Activated CD4-positive, alpha-beta T cell treated with anti-CD3 and anti-CD28 coated beads, Interleukin-2, amount 10 ng/mL, durations not matched to agents 24 days and 14 days (primary cell): ENCODE measurements at regions of chr1 and their contacts with region 1.

Region 1: GRCh38 chr1:89454845-89455521 is 69.6 kb upstream of the LRRC8B start:
- DNase-seq: peak; percentile 91
- H3K4me3 Mint-ChIP-seq: no peak overlapping the region
- H3K27ac Mint-ChIP-seq: no peak overlapping the region
- H3K4me1 Mint-ChIP-seq: peaks cover 23% of the 10 kb centered on the region
- H3K27me3 Mint-ChIP-seq: peaks cover 38% of the 10 kb centered on the region

Region 2: GRCh38 chr1:88983791-88984559 is 471.0 kb before region 1 on chr1:
- intact Hi-C with region 1: loop called (anchors 2 kb)
- DNase-seq: peak; percentile 79
- H3K4me3 Mint-ChIP-seq: peak overlapping the region; percentile 54
- H3K27ac Mint-ChIP-seq: peak overlapping the region; percentile 90
- H3K4me1 Mint-ChIP-seq: peaks cover 77% of the 10 kb centered on the region
- H3K27me3 Mint-ChIP-seq: no peaks in the 10 kb centered on the region

Region 3: GRCh38 chr1:89041119-89041641 is 413.8 kb before region 1 on chr1:
- intact Hi-C with region 1: loop called (anchors 1 kb)
- DNase-seq: peak; percentile 66
- H3K4me3 Mint-ChIP-seq: peak overlapping the region; percentile 59
- H3K27ac Mint-ChIP-seq: peak overlapping the region; percentile 82
- H3K4me1 Mint-ChIP-seq: peaks cover 32% of the 10 kb centered on the region
- H3K27me3 Mint-ChIP-seq: peaks cover 10% of the 10 kb centered on the region

Region 4: DNA sequence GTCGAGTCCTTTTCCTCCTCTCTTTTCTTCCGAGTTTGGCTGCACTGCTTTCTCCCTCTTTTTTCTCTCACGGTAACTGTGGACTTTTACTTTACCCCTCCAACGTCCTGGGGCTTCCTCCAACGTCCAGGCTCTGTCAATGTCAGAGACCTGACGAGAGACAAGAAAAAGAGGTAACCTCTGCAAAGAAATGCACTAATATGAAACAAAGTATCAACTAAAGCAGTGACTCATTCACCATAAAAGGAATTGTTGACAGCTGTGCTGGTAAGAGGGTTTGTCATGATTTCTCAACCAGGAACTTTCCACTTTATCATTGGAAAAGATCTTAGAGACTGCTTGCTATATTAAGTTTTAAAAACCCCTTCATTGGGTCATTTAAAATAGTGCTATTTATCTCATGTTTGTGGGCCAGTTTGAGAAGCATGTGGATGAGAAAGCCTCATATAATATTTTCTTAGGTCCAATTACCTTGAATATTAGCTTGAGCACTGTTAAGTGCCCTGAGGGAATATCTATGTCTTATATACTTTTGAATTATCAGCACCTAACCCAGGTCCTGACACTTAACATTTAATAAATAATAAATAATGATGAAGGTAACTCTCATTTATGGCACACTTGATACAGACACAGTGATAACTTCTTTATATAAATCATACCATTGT is 328.9 kb before region 1 on chr1 and contains the start of gene GBP2:
- intact Hi-C with region 1: loop called (anchors 2 kb)
- DNase-seq: peak; percentile 81
- H3K4me3 Mint-ChIP-seq: peak within 1 kb of the TSS; percentile 93
- H3K27ac Mint-ChIP-seq: peak within 1 kb of the TSS; percentile 98
- H3K4me1 Mint-ChIP-seq: peaks cover 61% of the 10 kb centered on the region
- H3K27me3 Mint-ChIP-seq: no peaks in the 10 kb centered on the region
- total RNA-seq, gene GBP2: 168 and 169 TPM in 2 replicates

Region 5: DNA sequence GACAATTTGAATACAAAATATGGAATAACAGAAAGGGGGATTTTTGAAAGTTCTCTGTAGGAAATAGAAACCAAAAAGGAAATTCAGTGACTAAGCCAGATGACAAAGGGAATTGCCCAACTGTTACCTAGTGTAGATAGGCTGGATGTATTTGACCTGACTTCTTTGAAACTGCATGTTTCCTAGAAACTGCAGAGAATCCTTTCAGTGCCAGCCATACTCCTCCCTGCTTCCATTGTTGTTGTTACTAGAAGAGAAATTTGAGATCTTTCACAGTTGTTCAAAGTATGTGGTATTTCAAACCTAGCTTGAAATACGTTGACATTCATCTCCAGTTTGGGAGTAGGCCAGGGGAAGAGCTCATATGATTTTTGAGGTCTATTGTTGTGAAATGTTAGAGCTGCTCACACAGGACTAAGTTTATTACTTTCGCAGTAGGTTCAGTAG is 180.5 kb before region 1 on chr1:
- intact Hi-C with region 1: loop called (anchors 5 kb)
- DNase-seq: peak; percentile 85
- H3K4me3 Mint-ChIP-seq: peak overlapping the region; percentile 99
- H3K27ac Mint-ChIP-seq: peak overlapping the region; percentile 96
- H3K4me1 Mint-ChIP-seq: peaks cover 64% of the 10 kb centered on the region
- H3K27me3 Mint-ChIP-seq: no peaks in the 10 kb centered on the region

Region 6: DNA sequence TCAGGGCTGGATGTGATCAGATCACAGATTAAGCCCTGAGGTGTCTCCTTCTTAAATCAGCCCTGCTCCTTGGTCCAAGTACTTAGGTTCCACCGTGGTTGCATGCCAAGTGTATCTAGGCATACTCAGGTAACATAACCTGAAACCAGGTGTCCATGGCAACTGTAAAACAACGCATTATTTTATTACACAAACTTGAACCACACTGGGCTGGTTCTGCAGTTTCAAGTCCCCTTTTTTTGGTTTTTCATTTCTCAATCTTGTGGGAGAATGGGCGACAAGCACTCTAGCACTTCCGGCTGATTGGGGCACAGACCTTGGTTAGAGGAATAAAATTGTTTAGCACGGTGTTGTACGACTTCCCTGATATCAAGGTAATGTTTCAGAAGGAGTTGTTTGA is 25.9 kb before region 1 on chr1:
- intact Hi-C with region 1: loop called (anchors 1 kb)
- DNase-seq: no peak
- H3K4me3 Mint-ChIP-seq: no peak overlapping the region
- H3K27ac Mint-ChIP-seq: no peak overlapping the region
- H3K4me1 Mint-ChIP-seq: peaks cover 5% of the 10 kb centered on the region
- H3K27me3 Mint-ChIP-seq: peaks cover 5% of the 10 kb centered on the region

Region 7: GRCh38 chr1:89472952-89473351 is 18.0 kb after region 1 on chr1:
- intact Hi-C with region 1: no loop called
- DNase-seq: no peak
- H3K4me3 Mint-ChIP-seq: no peak overlapping the region
- H3K27ac Mint-ChIP-seq: no peak overlapping the region
- H3K4me1 Mint-ChIP-seq: no peaks in the 10 kb centered on the region
- H3K27me3 Mint-ChIP-seq: peaks cover 56% of the 10 kb centered on the region

Region 8: GRCh38 chr1:89724369-89725010 is 269.5 kb after region 1 on chr1:
- intact Hi-C with region 1: no loop called
- DNase-seq: peak; percentile 85
- H3K4me3 Mint-ChIP-seq: peak overlapping the region; percentile 50
- H3K27ac Mint-ChIP-seq: peak overlapping the region; percentile 100
- H3K4me1 Mint-ChIP-seq: peaks cover 81% of the 10 kb centered on the region
- H3K27me3 Mint-ChIP-seq: no peaks in the 10 kb centered on the region